Activated naive CD4-positive, alpha-beta T cell treated with anti-CD3 and anti-CD28 coated beads for 36 hours (primary cell): ENCODE measurements at regions of chr3 and their contacts with region 1.

Region 1: GRCh38 chr3:187919048-187919447 is 173.8 kb upstream of the BCL6 start:
- DNase-seq: peak; percentile 77
- H3K4me3 Mint-ChIP-seq: peak overlapping the region; percentile 60
- H3K27ac Mint-ChIP-seq: peak overlapping the region; percentile 94
- H3K4me1 Mint-ChIP-seq: peaks cover 83% of the 10 kb centered on the region
- H3K27me3 Mint-ChIP-seq: no peaks in the 10 kb centered on the region

Region 2: GRCh38 chr3:187694801-187695200 is 224.2 kb before region 1 on chr3:
- CTCF ChIA-PET with region 1: no interaction called
- intact Hi-C with region 1: no loop called
- DNase-seq: no peak
- H3K4me3 Mint-ChIP-seq: no peak overlapping the region
- H3K27ac Mint-ChIP-seq: no peak overlapping the region
- H3K4me1 Mint-ChIP-seq: no peaks in the 10 kb centered on the region
- H3K27me3 Mint-ChIP-seq: peaks cover 17% of the 10 kb centered on the region

Region 3: GRCh38 chr3:187770224-187770623 is 148.8 kb before region 1 on chr3:
- CTCF ChIA-PET with region 1: no interaction called
- intact Hi-C with region 1: loop called (anchors 1 kb)
- DNase-seq: peak; percentile 73
- H3K4me3 Mint-ChIP-seq: no peak overlapping the region
- H3K27ac Mint-ChIP-seq: peak overlapping the region; percentile 82
- H3K4me1 Mint-ChIP-seq: peaks cover 38% of the 10 kb centered on the region
- H3K27me3 Mint-ChIP-seq: no peaks in the 10 kb centered on the region

Region 4: GRCh38 chr3:187870360-187871203 is 48.5 kb before region 1 on chr3:
- CTCF ChIA-PET with region 1: no interaction called
- intact Hi-C with region 1: loop called (anchors 1 kb)
- DNase-seq: peak; percentile 34
- H3K4me3 Mint-ChIP-seq: no peak overlapping the region
- H3K27ac Mint-ChIP-seq: peak overlapping the region; percentile 37
- H3K4me1 Mint-ChIP-seq: peaks cover 12% of the 10 kb centered on the region
- H3K27me3 Mint-ChIP-seq: no peaks in the 10 kb centered on the region

Region 5: DNA sequence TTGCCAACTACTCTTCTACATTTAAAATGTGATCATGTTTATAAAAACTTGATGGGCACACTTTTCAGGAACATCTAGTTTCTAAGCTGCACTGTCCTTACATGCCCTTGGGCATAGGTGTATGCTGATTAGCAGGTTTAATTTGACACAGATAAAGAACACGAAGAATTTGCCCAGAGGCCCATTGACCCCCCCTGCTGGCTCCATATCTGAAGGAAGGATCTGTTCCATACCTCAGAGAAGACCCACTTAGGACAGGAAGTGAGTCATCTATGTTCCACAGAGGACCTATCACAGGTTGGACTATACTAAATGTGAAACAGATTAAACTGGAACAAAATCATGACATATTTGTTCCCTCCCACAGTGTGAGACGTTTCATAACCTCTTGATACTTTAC is 142.1 kb after region 1 on chr3:
- CTCF ChIA-PET with region 1: interaction called, 4 read pairs
- intact Hi-C with region 1: loop called (anchors 2 kb)
- DNase-seq: peak; percentile 74
- H3K4me3 Mint-ChIP-seq: no peak overlapping the region
- H3K27ac Mint-ChIP-seq: peak overlapping the region; percentile 68
- H3K4me1 Mint-ChIP-seq: peaks cover 32% of the 10 kb centered on the region
- H3K27me3 Mint-ChIP-seq: no peaks in the 10 kb centered on the region

Region 6: GRCh38 chr3:188286087-188286513 is 367.1 kb after region 1 on chr3:
- CTCF ChIA-PET with region 1: no interaction called
- intact Hi-C with region 1: loop called (anchors 1 kb)
- DNase-seq: peak; percentile 32
- H3K4me3 Mint-ChIP-seq: no peak overlapping the region
- H3K27ac Mint-ChIP-seq: no peak overlapping the region
- H3K4me1 Mint-ChIP-seq: peaks cover 45% of the 10 kb centered on the region
- H3K27me3 Mint-ChIP-seq: no peaks in the 10 kb centered on the region

Region 7: DNA sequence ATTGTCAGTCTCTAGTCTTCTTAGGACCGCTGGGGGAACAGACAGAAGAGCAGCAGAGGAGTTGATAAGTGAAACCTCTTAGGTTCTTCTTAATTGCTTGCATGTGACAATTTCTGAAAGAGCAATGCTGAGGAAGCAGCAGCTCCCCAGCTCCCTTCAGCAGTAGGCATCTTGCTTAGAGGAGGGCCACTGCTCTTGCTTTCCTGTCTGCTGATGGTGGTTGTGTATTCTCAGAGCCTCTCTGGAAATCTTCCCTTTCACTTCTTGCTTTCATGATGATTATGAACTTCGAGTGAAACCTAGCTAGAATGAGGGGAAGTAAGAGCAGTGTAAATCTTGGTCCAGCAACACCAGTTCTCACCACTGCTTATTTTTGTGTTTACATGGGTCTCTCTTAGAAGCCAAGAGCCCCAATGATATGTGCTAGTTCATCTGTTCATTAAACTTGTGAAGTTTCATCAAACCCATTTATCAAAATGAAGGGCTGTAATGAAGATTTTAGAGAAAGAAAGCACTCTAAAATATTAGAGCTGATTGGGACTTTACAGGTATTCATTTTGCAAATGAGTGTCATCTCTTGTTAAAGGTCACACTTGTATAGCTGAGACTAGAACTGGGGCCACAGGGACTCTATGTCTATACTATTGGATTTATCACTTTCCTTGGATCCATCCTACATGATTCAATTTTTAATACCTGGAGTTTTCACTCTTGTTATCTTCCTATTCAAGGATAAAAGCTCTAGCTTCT is 481.6 kb after region 1 on chr3:
- CTCF ChIA-PET with region 1: no interaction called
- intact Hi-C with region 1: loop called (anchors 5 kb)
- DNase-seq: peak; percentile 60
- H3K4me3 Mint-ChIP-seq: no peak overlapping the region
- H3K27ac Mint-ChIP-seq: peak overlapping the region; percentile 43
- H3K4me1 Mint-ChIP-seq: peaks cover 70% of the 10 kb centered on the region
- H3K27me3 Mint-ChIP-seq: no peaks in the 10 kb centered on the region

Region 8: GRCh38 chr3:189132231-189132707 is 1213.2 kb after region 1 on chr3:
- CTCF ChIA-PET with region 1: no interaction called
- intact Hi-C with region 1: loop called (anchors 1 kb)
- DNase-seq: peak; percentile 91
- H3K4me3 Mint-ChIP-seq: peak overlapping the region; percentile 41
- H3K27ac Mint-ChIP-seq: peak overlapping the region; percentile 76
- H3K4me1 Mint-ChIP-seq: peaks cover 21% of the 10 kb centered on the region
- H3K27me3 Mint-ChIP-seq: no peaks in the 10 kb centered on the region